Tibial artery (tissue), 4 donors: ENCODE measurements at regions of chr12 and their contacts with region 1.

Region 1: DNA sequence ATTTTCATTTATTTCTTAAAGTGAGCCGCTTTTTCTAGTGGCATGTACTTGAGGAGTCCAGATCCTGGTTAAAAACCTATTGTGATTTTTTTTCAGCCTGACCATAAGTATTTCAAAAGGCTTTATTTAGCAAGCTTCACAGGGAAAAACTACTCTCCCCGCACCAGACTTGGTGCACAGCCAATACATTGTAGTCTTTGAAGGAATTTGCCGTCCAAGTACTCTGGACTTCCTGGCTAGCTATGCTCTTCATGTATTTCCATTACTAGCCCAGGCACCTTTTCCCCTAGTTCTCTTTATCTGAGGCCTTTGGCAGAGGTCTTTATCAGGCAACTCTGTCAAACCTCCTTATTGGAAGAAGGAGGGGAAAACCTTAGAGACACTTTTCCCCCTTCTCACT is 234.7 kb downstream of the CCDC91 start:
- DNase-seq: no peak
- H3K4me3 ChIP-seq: no peak overlapping the region
- H3K27ac ChIP-seq: no peak overlapping the region
- H3K4me1 ChIP-seq: no peaks in the 10 kb centered on the region
- H3K27me3 ChIP-seq: no peaks in the 10 kb centered on the region
- CTCF ChIP-seq: no peak

Region 2: DNA sequence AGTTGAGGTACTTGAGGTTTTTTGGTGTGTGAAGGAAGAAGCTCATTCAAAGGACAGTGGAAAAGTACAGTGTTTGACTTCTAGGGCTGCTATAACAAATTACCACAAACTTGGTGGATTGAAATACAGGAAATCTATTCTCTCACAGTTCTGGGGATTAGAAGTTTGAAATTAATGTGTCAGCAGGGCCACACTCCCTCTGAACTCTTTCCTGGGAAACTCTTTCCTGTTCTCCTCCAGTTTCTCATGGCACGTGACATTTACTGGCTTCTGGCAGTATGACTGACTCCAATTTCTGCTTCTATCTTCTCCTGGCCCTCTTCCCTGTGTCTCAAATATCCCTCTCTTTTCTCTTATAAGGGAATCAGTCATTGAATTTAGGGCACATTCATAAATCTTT is 74.5 kb before region 1 on chr12:
- intact Hi-C with region 1: no loop called
- DNase-seq: no peak
- H3K4me3 ChIP-seq: no peak overlapping the region
- H3K27ac ChIP-seq: no peak overlapping the region
- H3K4me1 ChIP-seq: peaks cover 0 to 8% (median 0%) of the 10 kb centered on the region in 4 donors
- H3K27me3 ChIP-seq: no peaks in the 10 kb centered on the region
- CTCF ChIP-seq: no peak

Region 3: GRCh38 chr12:28591831-28592230 is 166.9 kb after region 1 on chr12:
- intact Hi-C with region 1: loop called (anchors 10 kb)
- DNase-seq: no peak
- H3K4me3 ChIP-seq: no peak overlapping the region
- H3K27ac ChIP-seq: no peak overlapping the region
- H3K4me1 ChIP-seq: no peaks in the 10 kb centered on the region
- H3K27me3 ChIP-seq: no peaks in the 10 kb centered on the region
- CTCF ChIP-seq: no peak